CD14-positive monocyte (primary cell): ENCODE measurements at regions of chr12 and their contacts with region 1.

Region 1: DNA sequence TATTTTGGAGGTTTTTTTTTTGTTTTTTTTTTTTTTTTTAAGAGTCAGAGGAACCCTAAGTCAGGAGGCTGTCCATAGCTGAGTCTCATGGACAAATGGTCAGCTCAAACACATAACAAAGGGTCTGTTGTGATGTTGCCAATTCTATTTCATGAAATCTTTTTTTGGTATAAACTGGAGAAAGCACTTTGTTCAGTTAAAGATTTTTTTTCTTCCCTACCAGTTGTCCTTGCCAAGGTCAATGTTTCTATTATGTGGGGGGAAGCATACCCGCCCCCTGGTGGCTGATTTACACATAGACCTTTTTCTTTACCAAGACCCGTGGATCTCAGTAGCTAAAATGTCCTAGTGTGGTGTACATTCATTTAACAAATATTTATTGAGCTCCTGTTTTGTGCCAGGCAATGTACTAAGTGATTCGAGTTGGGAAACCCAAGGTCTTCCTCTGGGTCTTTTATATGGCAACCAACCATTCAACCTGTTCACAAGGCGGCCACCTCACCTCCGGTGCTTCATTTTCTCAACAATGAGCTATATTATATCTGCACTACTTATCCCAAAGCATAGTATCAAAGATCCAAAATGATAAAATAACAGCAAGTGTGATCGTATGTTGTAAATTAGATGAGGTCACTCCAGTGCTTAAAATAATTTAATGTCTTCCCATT is 214.5 kb downstream of the PAH start:
- DNase-seq: peak; percentile 10 to 29 (median 27)
- H3K4me3 ChIP-seq: no peak overlapping the region
- H3K4me3 Mint-ChIP-seq: no peak overlapping the region
- H3K27ac ChIP-seq: no peak overlapping the region
- H3K27ac Mint-ChIP-seq: no peak overlapping the region
- H3K4me1 ChIP-seq: no peaks in the 10 kb centered on the region
- H3K4me1 Mint-ChIP-seq: no peaks in the 10 kb centered on the region
- H3K27me3 ChIP-seq: no peaks in the 10 kb centered on the region
- H3K27me3 Mint-ChIP-seq: peaks cover 3 to 12% (median 5%) of the 10 kb centered on the region in 3 donors
- CTCF ChIP-seq: peak; percentile 76

Region 2: GRCh38 chr12:101792051-101792931 is 910.3 kb before region 1 on chr12:
- intact Hi-C with region 1: no loop called
- DNase-seq: no peak
- H3K4me3 ChIP-seq: no peak overlapping the region
- H3K4me3 Mint-ChIP-seq: no peak overlapping the region
- H3K27ac ChIP-seq: no peak overlapping the region
- H3K27ac Mint-ChIP-seq: peak overlapping the region in 2 of 7 donors; percentile 9 to 14
- H3K4me1 ChIP-seq: peaks cover 3 to 4% of the 10 kb centered on the region in 2 donors
- H3K4me1 Mint-ChIP-seq: peaks cover 9% of the 10 kb centered on the region
- H3K27me3 ChIP-seq: no peaks in the 10 kb centered on the region
- H3K27me3 Mint-ChIP-seq: peaks cover 0 to 2% (median 0%) of the 10 kb centered on the region in 3 donors
- CTCF ChIP-seq: no peak

Region 3: GRCh38 chr12:101939856-101940265 is 762.7 kb before region 1 on chr12:
- intact Hi-C with region 1: loop called (anchors 5 to 10 kb)
- DNase-seq: peak; percentile 25 to 55 (median 52)
- H3K4me3 ChIP-seq: no peak overlapping the region
- H3K4me3 Mint-ChIP-seq: no peak overlapping the region
- H3K27ac ChIP-seq: no peak overlapping the region
- H3K27ac Mint-ChIP-seq: peak overlapping the region in 1 of 7 donors; percentile 21
- H3K4me1 ChIP-seq: peaks cover 0 to 6% of the 10 kb centered on the region in 2 donors
- H3K4me1 Mint-ChIP-seq: peaks cover 10% of the 10 kb centered on the region
- H3K27me3 ChIP-seq: no peaks in the 10 kb centered on the region
- H3K27me3 Mint-ChIP-seq: peaks cover 0 to 5% (median 3%) of the 10 kb centered on the region in 3 donors
- CTCF ChIP-seq: peak; percentile 75